ENCODE measurements at regions of chr6 and their contacts with region 1.

Region 1: GRCh38 chr6:116595247-116595646 is 21.0 kb upstream of the RSPH4A start:
- DNase-seq: no peak
- H3K4me3 ChIP-seq: no peak overlapping the region
- H3K27ac ChIP-seq: no peak overlapping the region
- H3K4me1 ChIP-seq: no peaks in the 10 kb centered on the region
- H3K27me3 ChIP-seq: no peaks in the 10 kb centered on the region
- CTCF ChIP-seq: no peak
- EP300 ChIP-seq: no peak
- POLR2A ChIP-seq: no peak

Region 2: DNA sequence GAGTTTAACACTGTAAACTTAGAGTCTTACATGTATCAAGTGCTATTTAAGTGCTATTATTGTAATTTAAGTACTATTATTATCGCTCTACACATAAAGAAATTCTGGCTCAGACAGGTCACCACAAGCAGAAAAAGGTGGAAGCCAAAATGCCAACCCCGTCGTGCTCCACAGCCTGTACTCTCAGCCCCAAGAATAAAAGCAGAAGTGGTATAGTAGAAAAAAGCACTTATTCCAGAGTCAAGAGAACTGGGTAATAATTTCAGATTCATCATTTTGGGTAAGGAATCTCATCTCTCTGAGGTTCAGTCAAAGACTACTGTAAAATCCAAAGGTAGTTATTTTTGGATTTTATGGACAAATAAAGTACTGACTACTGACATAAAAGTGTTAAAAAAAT is 72.4 kb after region 1 on chr6:
- in situ Hi-C with region 1: no loop called
- intact Hi-C with region 1: loop called (anchors 2 kb)
- DNase-seq: no peak
- H3K4me3 ChIP-seq: peak overlapping the region in 3 of 4 donors; percentile 73 to 87 (median 82)
- H3K27ac ChIP-seq: peak overlapping the region in 2 of 4 donors; percentile 89 to 91
- H3K4me1 ChIP-seq: peaks cover 0 to 42% (median 21%) of the 10 kb centered on the region in 4 donors
- H3K27me3 ChIP-seq: no peaks in the 10 kb centered on the region
- CTCF ChIP-seq: no peak
- EP300 ChIP-seq: no peak
- POLR2A ChIP-seq: no peak

Region 3: GRCh38 chr6:117137711-117138110 is 542.5 kb after region 1 on chr6:
- in situ Hi-C with region 1: no loop called
- intact Hi-C with region 1: no loop called
- DNase-seq: no peak
- H3K4me3 ChIP-seq: no peak overlapping the region
- H3K27ac ChIP-seq: no peak overlapping the region
- H3K4me1 ChIP-seq: peaks cover 0 to 5% (median 0%) of the 10 kb centered on the region in 4 donors
- H3K27me3 ChIP-seq: no peaks in the 10 kb centered on the region
- CTCF ChIP-seq: no peak
- EP300 ChIP-seq: no peak
- POLR2A ChIP-seq: no peak

Measured in transverse colon (tissue), 4 donors.